PC-9 (cell line): ENCODE measurements at regions of chr3 and their contacts with region 1.

Region 1: DNA sequence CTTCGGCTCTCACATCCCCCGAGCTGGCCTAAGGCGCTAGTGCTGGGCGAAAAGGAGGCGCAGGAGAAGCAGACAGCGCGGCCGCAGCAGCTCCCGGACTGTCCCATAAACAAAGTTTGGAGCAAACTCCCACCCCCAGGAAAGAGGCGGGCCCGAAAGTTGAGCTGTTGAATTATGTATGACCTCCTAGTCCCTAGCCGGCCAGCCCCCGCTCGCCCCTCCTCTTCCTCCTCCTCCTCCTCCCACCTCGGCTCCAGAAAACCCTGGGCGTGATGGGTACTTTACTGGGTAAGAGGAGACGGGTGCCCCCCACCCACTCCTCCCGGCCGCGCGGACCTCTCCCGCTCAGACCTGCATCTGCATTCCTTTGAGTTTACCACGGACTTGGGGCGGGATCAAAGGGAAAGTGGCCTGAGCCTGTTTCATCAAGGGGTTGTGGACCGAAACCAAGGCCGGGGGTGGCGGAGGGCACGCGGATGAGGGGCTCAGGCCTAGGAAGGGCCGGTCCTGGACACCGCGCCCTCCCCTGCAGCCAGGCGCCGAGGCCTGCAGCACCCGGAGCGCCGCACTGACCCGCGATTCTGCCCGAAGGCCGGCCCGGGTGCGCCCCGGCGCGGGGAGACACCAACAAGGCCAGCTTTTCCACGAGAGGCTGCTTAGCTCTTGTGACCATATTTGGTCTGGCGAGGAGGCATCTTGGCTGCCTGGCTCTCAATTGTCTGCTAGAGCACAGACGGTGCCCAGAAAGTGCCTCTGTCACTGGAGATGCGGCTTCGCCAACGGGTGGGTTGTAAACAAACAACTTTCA is at the start of gene WWTR1:
- DNase-seq: peak; percentile 92 to 98
- H3K4me3 ChIP-seq: peak within 1 kb of the TSS; percentile 95
- H3K27ac ChIP-seq: peak within 1 kb of the TSS; percentile 97
- H3K4me1 ChIP-seq: peaks cover 52% of the 10 kb centered on the region
- H3K27me3 ChIP-seq: no peaks in the 10 kb centered on the region
- CTCF ChIP-seq: 0 out of 2 replicates have a peak, but pooled peaks have one; percentile 15
- total RNA-seq, gene WWTR1: 73.5 and 85.3 TPM in 2 replicates

Region 2: DNA sequence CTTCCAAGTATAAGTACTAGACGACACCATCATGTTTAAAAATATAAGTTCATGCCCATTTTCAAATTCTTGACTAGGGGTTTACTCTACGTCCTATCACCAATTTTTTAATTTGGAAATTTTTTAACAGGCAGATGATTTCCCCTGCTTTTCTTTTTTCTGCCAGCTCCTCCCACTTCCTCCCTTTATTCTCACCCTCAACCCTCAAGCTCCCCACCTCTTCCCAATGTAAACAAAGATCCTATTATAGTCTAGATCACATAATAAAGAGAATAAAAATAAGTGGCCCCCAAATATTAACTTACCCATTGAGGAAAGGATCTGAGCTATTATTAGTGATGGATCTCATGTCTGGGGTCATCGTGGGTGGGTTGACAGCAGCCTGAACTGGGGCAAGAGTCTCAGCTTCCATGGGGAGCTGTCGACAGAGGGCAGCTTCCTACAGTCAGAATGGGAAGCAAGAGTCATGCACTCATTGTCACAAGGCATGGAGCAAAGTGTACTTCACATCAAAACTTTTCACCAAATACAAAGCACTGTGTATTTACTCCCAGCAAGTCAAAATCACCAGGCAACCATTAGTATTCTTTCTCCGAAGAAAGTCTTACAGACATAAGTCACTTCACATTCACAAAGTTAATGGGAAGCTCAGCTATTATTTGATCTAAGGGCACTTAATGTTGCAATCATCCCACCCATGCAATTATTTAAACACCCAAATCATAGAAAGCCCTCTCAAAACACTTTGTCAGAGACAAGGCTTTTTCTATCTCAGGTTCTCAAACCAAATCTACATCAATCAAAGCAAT is 130.4 kb before region 1 on chr3:
- CTCF ChIA-PET with region 1: no interaction called
- POLR2A ChIA-PET with region 1: interaction called, 20 read pairs
- intact Hi-C with region 1: loop called (anchors 5 kb)
- DNase-seq: no peak
- H3K4me3 ChIP-seq: no peak overlapping the region
- H3K27ac ChIP-seq: no peak overlapping the region
- H3K4me1 ChIP-seq: no peaks in the 10 kb centered on the region
- H3K27me3 ChIP-seq: no peaks in the 10 kb centered on the region
- CTCF ChIP-seq: no peak

Region 3: DNA sequence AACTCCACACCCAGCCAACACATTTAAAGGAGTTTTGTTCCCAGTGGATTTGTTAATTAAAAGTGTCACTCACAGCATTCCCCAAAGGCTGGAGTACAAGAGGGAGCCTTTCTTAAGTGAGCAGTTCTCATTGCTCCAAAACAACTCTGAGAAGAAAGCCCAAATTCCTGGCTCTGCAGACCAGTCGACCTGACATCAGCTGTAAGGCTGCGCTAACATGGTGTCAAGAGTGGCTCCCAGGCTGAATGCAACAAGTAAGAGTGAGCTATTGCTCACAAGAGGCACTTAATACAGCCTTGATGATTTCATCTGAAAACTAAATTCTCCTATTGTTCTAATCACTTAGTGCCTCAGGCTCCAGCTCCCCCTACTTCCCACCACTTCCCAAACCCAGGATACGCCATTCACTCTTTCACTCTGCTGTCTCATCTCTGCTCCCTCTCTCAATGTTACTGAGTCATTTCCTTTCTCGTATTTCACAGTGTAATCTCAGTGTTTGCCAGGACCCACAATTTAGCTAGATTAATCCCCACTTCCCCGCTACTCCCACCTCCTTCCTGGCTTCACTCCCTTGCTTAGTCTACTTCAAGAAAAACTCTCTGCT is 82.1 kb before region 1 on chr3:
- CTCF ChIA-PET with region 1: interaction called, 4 read pairs
- POLR2A ChIA-PET with region 1: interaction called, 38 read pairs
- intact Hi-C with region 1: no loop called
- DNase-seq: peak; percentile 73 to 91
- H3K4me3 ChIP-seq: peak overlapping the region; percentile 35; the same call in 1 of the 2 replicates
- H3K27ac ChIP-seq: peak overlapping the region; percentile 98
- H3K4me1 ChIP-seq: peaks cover 89% of the 10 kb centered on the region
- H3K27me3 ChIP-seq: no peaks in the 10 kb centered on the region
- CTCF ChIP-seq: no peak

Region 4: DNA sequence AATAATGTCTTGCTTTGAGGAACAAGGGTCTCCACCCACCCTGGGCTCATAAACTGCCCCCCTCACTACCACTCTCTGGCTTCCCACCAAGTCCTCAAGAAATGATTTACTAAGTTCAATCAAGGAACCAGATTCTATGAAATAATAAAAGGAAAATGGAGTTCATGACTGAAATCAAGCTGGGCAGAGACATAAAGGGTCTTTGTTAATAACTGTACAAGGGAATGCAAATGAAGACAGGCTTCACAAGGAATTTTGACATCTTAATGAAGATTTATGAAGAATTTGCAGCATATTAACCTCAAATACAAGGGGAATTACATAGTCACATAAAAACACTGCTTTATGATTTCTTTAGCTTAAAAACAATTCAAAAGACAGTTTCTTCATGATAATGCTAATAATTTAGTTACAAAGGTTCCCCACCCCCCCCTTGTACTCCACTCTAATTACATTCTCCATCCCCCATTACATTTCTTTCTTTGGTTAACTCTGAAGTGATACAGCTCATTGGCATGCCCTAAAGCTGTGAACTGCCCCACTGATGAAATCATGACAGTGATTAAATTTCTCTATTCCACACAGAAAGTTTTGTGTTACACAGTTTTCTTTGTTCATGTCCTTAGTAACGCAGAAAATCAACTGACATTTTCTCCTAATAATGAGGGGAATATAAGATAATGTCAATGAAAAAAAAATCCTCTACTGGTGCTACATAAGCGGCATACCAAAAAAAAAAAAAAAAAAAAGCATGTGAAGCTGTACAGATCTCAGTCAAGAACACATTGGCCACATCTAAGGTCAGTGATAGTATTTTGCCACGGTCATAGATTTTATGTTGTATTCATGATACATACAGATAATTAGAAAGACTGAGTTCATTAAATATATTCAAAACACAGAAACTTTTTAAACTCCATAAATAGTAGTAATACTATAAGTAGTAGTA is 54.7 kb before region 1 on chr3:
- CTCF ChIA-PET with region 1: interaction called, 11 read pairs
- POLR2A ChIA-PET with region 1: interaction called, 6 read pairs
- intact Hi-C with region 1: no loop called
- DNase-seq: no peak
- H3K4me3 ChIP-seq: no peak overlapping the region
- H3K27ac ChIP-seq: peak overlapping the region; percentile 62
- H3K4me1 ChIP-seq: peaks cover 44% of the 10 kb centered on the region
- H3K27me3 ChIP-seq: no peaks in the 10 kb centered on the region
- CTCF ChIP-seq: no peak

Region 5: GRCh38 chr3:149736175-149736952 is 78.2 kb after region 1 on chr3:
- CTCF ChIA-PET with region 1: no interaction called
- POLR2A ChIA-PET with region 1: no interaction called
- intact Hi-C with region 1: loop called (anchors 1 kb)
- DNase-seq: peak; percentile 57 to 90
- H3K4me3 ChIP-seq: no peak overlapping the region
- H3K27ac ChIP-seq: peak overlapping the region; percentile 81
- H3K4me1 ChIP-seq: peaks cover 27% of the 10 kb centered on the region
- H3K27me3 ChIP-seq: no peaks in the 10 kb centered on the region
- CTCF ChIP-seq: no peak

Region 6: GRCh38 chr3:149812606-149813366 is 154.7 kb after region 1 on chr3 and contains the start of gene RNF13:
- CTCF ChIA-PET with region 1: no interaction called
- POLR2A ChIA-PET with region 1: no interaction called
- intact Hi-C with region 1: loop called (anchors 5 kb)
- DNase-seq: peak; percentile 82 to 93
- H3K4me3 ChIP-seq: peak within 1 kb of the TSS; percentile 84
- H3K27ac ChIP-seq: peak within 1 kb of the TSS; percentile 96
- H3K4me1 ChIP-seq: peaks cover 46% of the 10 kb centered on the region
- H3K27me3 ChIP-seq: no peaks in the 10 kb centered on the region
- CTCF ChIP-seq: no peak
- total RNA-seq, gene RNF13: 40.1 and 65.0 TPM in 2 replicates